Left cardiac atrium (tissue), 4 donors: ENCODE measurements at regions of chr4 and their contacts with region 1.

Region 1: DNA sequence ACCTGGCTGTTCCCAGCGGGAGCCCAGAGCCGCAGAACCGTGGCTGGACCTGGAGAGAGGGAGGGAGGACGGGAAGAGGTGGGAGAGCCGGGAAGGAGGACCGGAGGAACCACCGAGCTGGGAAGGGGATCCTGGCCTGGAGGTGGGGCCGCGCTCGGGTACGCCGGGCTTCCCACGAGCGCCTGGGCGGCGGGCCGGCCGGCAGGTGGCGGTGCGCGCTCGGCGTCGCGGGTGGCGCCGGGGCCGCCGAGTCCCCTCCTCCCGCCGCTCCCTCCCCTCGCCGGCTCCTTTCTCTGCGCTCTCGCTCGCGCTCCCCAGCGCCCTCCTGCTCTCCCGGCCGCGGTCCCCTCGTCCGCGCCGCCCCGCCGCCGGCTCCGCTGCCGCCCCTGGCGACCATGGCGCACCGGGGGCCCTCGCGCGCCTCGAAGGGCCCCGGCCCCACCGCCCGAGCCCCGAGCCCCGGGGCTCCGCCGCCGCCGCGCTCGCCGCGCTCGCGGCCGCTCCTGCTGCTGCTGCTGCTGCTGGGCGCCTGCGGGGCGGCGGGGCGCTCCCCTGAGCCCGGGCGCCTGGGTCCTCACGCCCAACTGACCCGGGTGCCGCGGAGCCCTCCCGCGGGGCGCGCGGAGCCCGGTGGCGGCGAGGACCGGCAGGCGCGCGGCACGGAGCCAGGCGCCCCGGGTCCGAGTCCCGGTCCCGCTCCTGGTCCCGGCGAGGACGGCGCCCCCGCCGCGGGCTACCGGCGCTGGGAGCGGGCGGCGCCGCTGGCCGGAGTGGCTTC is at the start of gene SORCS2:
- DNase-seq: peak; percentile 70
- ATAC-seq: peak; percentile 86 to 94
- total RNA-seq, gene SORCS2: 2.4 to 2.6 TPM

Region 2: GRCh38 chr4:6855692-6856297 is 336.6 kb before region 1 on chr4:
- intact Hi-C with region 1: no loop called
- DNase-seq: no peak
- ATAC-seq: peak; percentile 72 to 80

Region 3: DNA sequence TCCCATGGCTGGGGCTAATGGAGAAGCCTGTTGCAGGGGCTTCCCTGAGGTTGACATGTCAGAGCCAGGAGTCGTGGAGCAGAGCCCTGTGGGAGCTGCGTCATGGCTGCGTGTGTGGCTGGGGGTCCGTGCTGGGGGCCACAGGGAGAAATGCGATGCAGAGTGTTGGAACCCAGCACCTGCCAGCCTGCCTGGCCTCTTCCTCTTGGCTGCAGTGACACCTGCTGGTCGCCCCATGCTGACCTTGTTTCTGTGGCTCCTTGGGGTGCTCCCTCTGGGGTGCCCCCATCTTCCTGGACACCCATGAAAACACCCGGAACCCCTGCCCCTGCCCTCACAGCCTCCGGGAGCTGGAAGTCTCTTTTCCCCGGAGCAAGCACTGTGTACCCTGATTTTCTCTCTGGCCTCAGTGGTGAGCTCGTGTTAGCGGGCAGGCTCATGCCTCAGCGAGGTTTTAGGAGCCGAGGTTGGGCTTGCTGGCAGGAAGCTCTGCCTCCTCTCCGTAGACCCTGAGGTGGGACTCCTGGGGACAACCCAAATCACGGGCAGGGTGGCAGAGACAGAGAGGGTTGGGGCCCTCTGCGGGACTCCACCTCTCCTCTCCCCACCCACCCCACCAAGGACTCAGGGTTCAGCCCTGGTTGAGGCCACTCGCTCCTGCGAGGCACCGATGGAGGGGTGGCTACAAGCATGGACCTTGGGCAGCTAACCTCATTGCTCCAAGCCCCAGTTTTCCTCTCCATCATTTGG is 103.6 kb after region 1 on chr4:
- intact Hi-C with region 1: loop called (anchors 2 to 5 kb)
- DNase-seq: no peak
- ATAC-seq: peak; percentile 43 to 53

Region 4: DNA sequence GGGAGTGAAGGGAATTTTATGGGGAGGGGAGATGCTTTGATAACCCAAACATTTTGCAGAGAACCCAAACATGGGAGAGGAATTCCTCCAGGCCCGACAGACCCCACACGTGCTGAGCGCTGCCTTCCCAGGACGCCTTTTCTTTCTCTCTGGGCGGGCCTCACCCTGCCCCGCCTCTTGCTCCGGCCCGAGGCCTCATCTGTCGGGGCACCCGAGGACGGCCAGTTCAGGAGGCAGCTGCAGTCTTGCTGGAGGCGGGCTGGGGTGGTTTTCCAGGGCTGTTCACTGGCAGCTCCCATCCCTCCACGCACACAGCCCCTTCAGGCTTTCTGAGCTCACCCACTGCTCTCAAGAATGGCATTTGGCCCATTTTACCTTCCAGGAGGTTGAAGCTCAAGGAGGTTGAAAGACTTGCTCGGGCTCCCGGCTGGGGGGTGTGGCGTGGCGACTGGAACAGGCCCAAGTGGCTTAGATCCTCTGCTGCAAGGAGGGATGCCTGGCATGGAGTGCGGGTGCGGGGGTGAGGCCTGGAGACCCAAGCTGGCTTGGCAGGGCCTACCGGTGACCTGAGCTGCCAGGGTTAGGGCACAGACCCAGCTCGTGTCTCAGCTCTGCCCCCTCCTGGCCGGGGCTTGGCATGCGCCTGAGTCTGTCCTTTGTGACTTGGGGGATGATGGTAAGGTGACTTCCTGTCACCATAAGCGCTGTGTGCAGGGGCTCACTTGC is 143.1 kb after region 1 on chr4:
- intact Hi-C with region 1: loop called in 1 of 2 experiments (anchors 5 kb)
- DNase-seq: peak; percentile 45
- ATAC-seq: peak; percentile 52 to 62

Region 5: DNA sequence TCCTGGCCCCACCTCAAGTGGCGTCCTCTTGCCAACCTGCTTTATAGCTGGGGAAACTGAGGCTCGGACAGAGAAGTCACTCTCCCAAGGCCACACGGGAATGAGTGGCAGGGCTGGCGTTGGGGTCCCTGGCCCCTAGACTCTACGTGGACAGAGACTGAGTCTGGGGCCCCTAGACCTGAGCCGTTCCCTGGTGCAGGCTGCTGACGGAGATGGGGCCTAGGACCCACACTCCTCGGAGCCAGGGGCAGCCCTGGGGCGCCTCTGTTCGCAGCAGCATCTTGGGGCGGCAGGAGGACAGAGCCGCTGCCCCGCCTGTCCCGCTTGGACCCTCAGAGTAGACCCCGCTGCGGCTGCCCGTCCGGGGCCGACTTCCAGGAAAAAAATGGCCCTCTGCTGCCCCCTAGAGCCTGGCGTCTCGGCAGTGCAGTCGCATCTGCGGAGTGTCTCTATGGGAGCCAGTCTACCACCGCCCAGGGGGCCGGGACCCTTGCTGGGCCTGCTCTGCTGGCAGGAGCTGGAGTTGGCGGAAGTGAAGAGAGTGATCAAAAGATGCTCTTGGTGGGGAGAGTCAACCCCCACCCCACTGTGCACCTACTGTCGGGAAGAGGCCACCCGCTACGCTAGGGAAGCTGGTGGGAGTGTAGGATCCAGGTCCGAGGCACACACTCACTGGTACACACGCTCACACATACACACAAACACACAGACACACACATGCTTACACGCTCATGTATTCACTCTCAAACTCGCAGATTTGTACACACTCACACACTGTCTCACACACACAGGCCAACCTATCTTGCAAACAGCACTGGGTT is 527.1 kb after region 1 on chr4:
- intact Hi-C with region 1: loop called (anchors 5 to 10 kb)
- DNase-seq: peak; percentile 63
- ATAC-seq: peak; percentile 70 to 73